ENCODE measurements at regions of chr5 and their contacts with region 1.

Region 1: GRCh38 chr5:142151436-142152383 is 43.1 kb downstream of the NDFIP1 start:
- DNase-seq: no peak

Region 2: DNA sequence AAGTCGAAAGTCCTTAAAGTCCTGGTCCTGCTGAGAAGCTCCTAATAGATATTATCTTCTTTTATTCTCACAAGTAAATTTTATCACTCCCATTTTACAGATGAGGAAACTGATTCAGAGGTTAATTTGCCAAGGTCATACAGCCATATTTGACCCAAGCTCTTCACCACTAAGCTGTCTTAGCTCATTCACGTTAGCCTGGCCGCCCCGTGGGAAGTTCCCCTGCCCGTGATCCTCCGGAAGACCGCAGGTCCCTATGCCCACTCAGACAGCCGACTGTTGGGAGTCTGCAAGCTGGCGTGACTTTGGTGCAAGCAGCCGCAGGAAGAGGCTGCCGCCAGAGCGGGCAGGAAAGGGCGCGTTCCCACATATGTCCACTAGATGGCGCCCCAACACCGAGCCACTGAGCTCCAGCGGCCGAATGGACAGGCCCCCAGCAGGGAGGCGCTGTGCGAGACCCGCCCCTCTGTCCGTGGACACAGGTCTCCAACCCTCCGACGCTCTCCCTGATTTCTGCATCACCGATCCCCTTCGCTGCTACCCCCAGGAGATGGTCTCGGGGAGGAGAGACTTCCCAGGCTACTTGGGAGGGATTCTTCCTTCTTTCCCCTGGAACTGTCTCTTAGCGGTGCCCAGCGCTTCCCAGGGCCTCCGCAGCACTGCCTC is 459.7 kb before region 1 on chr5:
- intact Hi-C with region 1: loop called in 1 of 2 experiments (anchors 2 kb)
- DNase-seq: peak; percentile 96

Region 3: DNA sequence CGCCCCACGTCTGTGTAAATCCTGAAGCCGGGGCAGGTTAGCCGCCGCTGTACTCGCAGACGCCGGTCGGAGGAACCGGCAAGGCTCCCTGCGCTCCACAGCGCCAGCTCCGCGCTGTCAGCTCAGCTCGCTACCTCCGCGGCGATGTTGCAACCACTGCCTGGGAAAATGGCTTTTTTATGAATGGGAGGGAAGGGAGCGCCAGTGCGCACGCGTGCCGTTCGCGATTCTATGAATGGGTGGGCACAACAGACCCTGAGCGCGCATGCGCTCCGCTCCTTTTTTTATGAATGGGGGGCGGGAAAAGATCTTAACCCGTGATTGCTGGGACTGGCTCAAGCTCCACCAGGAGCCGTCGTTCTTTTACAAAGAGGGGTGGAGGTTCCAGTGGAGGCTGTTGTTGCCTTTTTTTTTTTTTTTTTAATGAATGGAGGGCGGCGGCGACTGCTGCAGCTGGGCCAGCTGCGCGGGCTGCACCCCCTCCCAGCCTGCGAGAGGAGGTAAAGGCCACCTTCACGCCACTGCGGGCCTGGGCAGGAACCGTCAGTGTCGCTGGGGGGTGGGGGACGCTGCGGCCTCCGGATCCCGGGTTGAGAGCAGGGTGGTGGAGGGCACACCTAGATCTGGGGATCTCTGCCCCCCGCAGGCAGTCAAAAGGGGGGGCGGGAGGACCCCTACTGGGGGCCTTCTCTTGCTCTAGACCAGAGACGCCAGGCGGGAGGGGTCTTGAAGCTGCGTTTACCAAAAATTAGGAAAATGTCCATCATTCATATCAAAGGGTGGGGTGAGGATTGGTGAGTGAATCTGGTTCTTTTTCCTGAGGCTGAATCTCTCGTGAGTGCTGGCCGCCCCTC is 173.4 kb after region 1 on chr5 and contains the start of gene SPRY4:
- intact Hi-C with region 1: loop called in 1 of 2 experiments (anchors 5 kb)
- DNase-seq: peak; percentile 98
- total RNA-seq, gene SPRY4: 12.5 to 20.7 TPM

Region 4: GRCh38 chr5:142548739-142549275 is 397.1 kb after region 1 on chr5:
- intact Hi-C with region 1: loop called (anchors 5 to 10 kb)
- DNase-seq: no peak

Measured in posterior vena cava (tissue), 2 donors.